HCT116 (cell line): ENCODE measurements at regions of chr20 and their contacts with region 1.

Region 1: DNA sequence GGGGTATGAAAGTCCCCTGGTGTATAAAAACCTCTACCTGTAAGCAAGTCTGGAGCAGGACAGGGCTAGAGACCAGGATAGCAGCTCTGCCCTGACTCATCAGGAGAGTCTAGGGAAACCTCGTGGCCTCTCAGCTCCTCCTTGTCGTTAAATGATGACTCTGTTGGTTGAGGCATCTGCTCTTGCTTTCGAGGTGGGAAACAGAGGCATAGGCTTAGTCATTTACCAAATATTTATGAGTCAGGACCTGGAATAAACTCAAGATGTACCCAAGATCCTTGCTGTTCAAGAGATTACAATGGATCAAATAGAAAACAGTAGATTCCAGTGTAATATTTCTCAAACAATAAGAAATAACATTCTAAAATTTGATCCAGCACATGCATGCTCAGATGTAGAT is 5.5 kb downstream of the MANBAL start:
- DNase-seq: peak; percentile 94
- ATAC-seq: peak; percentile 96
- H3K4me3 ChIP-seq: peak overlapping the region in 1 of 2 experiments; percentile 32; a peak in 2 of 4 replicates
- H3K27ac ChIP-seq: peak overlapping the region; percentile 86
- H3K4me1 ChIP-seq: peaks cover 34 to 65% of the 10 kb centered on the region in 2 experiments
- H3K27me3 ChIP-seq: no peaks in the 10 kb centered on the region
- CTCF ChIP-seq: no peak
- POLR2A ChIP-seq: no peak
- RAD21 ChIP-seq: no peak; the same call in 1 of the 2 replicates

Region 2: GRCh38 chr20:37316116-37316774 is 21.2 kb after region 1 on chr20:
- CTCF ChIA-PET with region 1: no interaction called
- POLR2A ChIA-PET with region 1: no interaction called
- RAD21 ChIA-PET with region 1: no interaction called
- intact Hi-C with region 1: no loop called
- DNase-seq: no peak
- ATAC-seq: no peak
- H3K4me3 ChIP-seq: no peak overlapping the region
- H3K27ac ChIP-seq: no peak overlapping the region
- H3K4me1 ChIP-seq: no peaks in the 10 kb centered on the region; a peak in 1 of 4 replicates
- H3K27me3 ChIP-seq: no peaks in the 10 kb centered on the region
- CTCF ChIP-seq: no peak
- POLR2A ChIP-seq: no peak
- RAD21 ChIP-seq: no peak

Region 3: GRCh38 chr20:37342231-37343177 is 47.5 kb after region 1 on chr20:
- CTCF ChIA-PET with region 1: no interaction called
- POLR2A ChIA-PET with region 1: no interaction called
- RAD21 ChIA-PET with region 1: no interaction called
- intact Hi-C with region 1: loop called (anchors 5 kb)
- DNase-seq: no peak
- ATAC-seq: peak; percentile 52
- H3K4me3 ChIP-seq: no peak overlapping the region
- H3K27ac ChIP-seq: no peak overlapping the region
- H3K4me1 ChIP-seq: peaks cover 32 to 48% of the 10 kb centered on the region in 2 experiments
- H3K27me3 ChIP-seq: no peaks in the 10 kb centered on the region
- CTCF ChIP-seq: peak in 2 of 3 experiments; percentile 27 to 30; a peak in 3 of 6 replicates
- POLR2A ChIP-seq: no peak
- RAD21 ChIP-seq: no peak

Region 4: GRCh38 chr20:37384683-37385174 is 89.7 kb after region 1 on chr20:
- CTCF ChIA-PET with region 1: no interaction called
- POLR2A ChIA-PET with region 1: no interaction called
- RAD21 ChIA-PET with region 1: no interaction called
- intact Hi-C with region 1: loop called (anchors 5 kb)
- DNase-seq: no peak
- ATAC-seq: peak; percentile 64
- H3K4me3 ChIP-seq: 0 out of 4 replicates have a peak overlapping the region, but pooled peaks of 1 of the 2 experiments have one; percentile 18
- H3K27ac ChIP-seq: peak overlapping the region; percentile 56; the same call in 1 of the 2 replicates
- H3K4me1 ChIP-seq: peaks cover 11 to 43% of the 10 kb centered on the region in 2 experiments
- H3K27me3 ChIP-seq: no peaks in the 10 kb centered on the region
- CTCF ChIP-seq: peak in 2 of 3 experiments; percentile 77 to 92; a peak in 5 of 6 replicates
- POLR2A ChIP-seq: no peak
- RAD21 ChIP-seq: peak; percentile 63

Region 5: GRCh38 chr20:37901654-37902503 is 606.9 kb after region 1 on chr20:
- CTCF ChIA-PET with region 1: no interaction called
- POLR2A ChIA-PET with region 1: no interaction called
- RAD21 ChIA-PET with region 1: no interaction called
- intact Hi-C with region 1: no loop called
- DNase-seq: peak; percentile 4
- ATAC-seq: peak; percentile 62
- H3K4me3 ChIP-seq: no peak overlapping the region
- H3K27ac ChIP-seq: no peak overlapping the region
- H3K4me1 ChIP-seq: no peaks in the 10 kb centered on the region
- H3K27me3 ChIP-seq: peaks cover 14% of the 10 kb centered on the region
- CTCF ChIP-seq: peak; percentile 5 to 43 (median 37); a peak in 3 of 6 replicates
- POLR2A ChIP-seq: no peak
- RAD21 ChIP-seq: peak; percentile 32; the same call in 1 of the 2 replicates